Heart right ventricle (tissue), 16 donors: ENCODE measurements at regions of chr12 and their contacts with region 1.

Region 1: GRCh38 chr12:52213512-52214420 is 19.3 kb upstream of the KRT7 start:
- DNase-seq: peak; percentile 58 to 81
- ATAC-seq: peak; percentile 77 to 94 (median 88)
- H3K4me3 ChIP-seq: no peak overlapping the region
- H3K27ac ChIP-seq: no peak overlapping the region
- H3K4me1 ChIP-seq: peaks cover 0 to 39% (median 16%) of the 10 kb centered on the region in 9 donors
- H3K27me3 ChIP-seq: peaks cover 0 to 10% (median 0%) of the 10 kb centered on the region in 7 donors
- CTCF ChIP-seq: peak; percentile 92 to 98 (median 96)

Region 2: DNA sequence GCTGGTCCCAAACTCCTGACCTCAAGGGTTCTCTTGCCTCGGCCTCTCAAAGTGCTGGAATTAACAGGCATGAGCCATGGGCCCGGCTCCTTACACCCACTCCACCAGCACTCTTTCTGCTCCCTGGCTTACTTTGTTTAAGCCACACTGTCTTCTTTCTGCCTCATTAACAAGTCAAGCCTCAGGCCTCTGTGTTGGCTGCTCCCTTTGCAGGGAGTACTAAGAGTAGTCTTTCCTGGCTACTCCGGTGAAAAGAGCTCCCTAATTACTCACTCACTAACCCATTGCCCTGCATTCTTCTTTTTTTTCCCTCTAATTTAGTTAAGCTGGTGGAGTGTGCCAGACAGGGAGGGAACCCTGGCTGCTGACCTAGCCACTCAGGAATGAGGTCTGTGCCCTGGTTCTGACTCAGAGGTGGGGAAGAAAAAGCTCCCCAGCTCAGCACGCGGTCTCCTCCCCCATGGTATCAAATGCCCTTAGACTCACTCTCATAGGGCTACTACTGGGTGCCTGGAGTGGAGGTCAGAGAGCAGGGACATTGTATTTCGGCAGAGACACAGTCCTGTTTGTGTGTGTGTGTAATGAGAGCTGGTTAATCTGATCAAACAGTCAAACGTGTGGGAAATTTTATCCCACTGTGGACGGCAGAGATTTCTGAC is 842.3 kb before region 1 on chr12:
- intact Hi-C with region 1: no loop called
- DNase-seq: peak in 1 of 2 donors; percentile 30
- ATAC-seq: peak; percentile 57 to 92 (median 82)
- H3K4me3 ChIP-seq: no peak overlapping the region
- H3K27ac ChIP-seq: peak overlapping the region in 1 of 10 donors; percentile 34
- H3K4me1 ChIP-seq: peaks cover 0 to 31% (median 3%) of the 10 kb centered on the region in 9 donors
- H3K27me3 ChIP-seq: no peaks in the 10 kb centered on the region
- CTCF ChIP-seq: no peak

Region 3: DNA sequence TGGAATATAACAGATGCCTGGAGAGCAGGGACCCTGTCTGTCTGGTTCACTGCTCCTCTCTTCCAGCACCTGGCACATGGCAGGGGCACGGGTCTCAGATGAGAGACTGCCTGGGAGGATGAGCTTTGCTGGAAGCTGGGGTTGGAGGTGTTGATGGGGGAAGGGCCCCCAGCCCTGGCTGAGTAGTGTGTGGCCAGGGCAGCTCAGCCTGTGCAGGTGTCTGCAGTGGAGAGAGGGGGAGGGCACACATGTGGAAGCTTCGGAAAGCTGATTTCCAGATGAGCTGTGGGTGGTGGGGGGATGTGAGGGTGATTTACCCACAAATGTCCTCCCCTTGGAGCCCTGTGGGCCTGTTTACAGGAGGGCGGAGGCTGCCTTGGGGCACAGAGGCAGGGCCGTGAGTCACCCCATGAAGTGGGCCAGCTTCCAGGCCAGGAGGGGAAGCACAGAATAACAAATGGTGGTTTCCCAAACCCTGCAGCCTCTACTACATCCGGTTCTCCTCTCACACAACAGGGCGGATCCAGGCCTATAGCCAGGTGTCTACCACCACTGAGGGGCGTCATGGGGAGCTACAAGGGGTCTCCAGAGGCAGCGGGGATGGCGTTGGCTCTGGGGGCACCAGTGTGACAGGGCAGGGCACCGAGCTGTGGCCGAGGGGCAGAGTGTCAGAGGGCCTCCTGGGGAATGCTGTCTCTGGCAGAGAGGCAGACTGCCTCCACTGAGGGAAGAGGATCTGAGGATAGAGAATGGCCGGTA is 30.3 kb after region 1 on chr12:
- intact Hi-C with region 1: no loop called
- DNase-seq: peak; percentile 56 to 64
- ATAC-seq: peak; percentile 58 to 87 (median 76)
- H3K4me3 ChIP-seq: no peak overlapping the region
- H3K27ac ChIP-seq: peak overlapping the region in 2 of 10 donors; percentile 17 to 64
- H3K4me1 ChIP-seq: peaks cover 0 to 31% (median 18%) of the 10 kb centered on the region in 9 donors
- H3K27me3 ChIP-seq: peaks cover 0 to 7% (median 1%) of the 10 kb centered on the region in 7 donors
- CTCF ChIP-seq: no peak

Region 4: DNA sequence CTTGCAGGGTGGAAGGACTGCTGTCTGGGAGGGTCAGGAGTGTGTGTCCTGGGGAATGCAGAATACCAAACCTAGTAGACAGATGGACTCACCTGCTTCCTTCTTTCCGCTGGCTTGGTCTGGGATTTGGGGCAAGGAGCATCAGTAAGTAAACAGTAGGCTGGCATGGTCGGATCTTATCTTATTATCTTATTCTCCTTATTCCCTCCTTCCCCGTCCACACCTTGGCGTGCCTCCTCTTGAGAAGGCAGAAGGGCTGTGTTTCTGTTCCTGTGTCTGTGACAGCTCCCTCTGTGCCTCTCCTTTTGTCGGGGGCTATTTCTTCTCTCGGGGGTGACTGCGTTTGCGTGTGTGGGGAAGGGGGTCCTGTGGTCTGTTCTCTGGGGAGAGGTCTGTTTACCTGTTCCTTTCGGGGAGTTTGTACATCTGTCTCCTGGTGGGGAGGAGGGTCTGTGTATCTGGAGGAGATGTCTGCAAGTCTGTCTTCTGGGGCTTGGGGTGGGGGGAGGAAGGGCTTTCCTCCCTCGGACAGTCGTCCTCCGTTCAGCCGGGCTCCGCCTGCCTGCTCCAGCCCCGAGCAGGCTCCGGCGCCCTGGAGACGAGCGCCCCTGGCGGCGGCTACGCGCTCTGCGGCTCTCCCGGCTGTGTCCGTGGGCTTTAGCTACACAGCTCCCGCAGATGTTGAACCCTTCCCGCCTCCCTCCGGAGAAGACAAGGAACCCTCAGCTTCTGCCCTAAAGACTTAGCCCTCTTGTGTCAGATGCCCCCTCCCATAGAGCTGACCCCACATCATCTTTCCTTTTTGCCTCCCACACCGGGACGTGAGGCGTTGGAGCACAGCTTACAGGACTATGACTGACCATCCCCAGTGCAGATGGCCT is 65.0 kb after region 1 on chr12:
- intact Hi-C with region 1: loop called in 3 of 10 experiments (anchors 5 to 10 kb)
- DNase-seq: peak; percentile 62 to 82
- ATAC-seq: peak; percentile 88 to 96 (median 92)
- H3K4me3 ChIP-seq: no peak overlapping the region
- H3K27ac ChIP-seq: no peak overlapping the region
- H3K4me1 ChIP-seq: peaks cover 0 to 32% (median 10%) of the 10 kb centered on the region in 9 donors
- H3K27me3 ChIP-seq: peaks cover 0 to 49% (median 24%) of the 10 kb centered on the region in 7 donors
- CTCF ChIP-seq: peak; percentile 91 to 99 (median 98)

Region 5: GRCh38 chr12:52515927-52516831 is 302.4 kb after region 1 on chr12:
- intact Hi-C with region 1: no loop called
- DNase-seq: no peak
- ATAC-seq: no peak
- H3K4me3 ChIP-seq: no peak overlapping the region
- H3K27ac ChIP-seq: no peak overlapping the region
- H3K4me1 ChIP-seq: no peaks in the 10 kb centered on the region
- H3K27me3 ChIP-seq: peaks cover 0 to 56% (median 5%) of the 10 kb centered on the region in 7 donors
- CTCF ChIP-seq: no peak

Region 6: GRCh38 chr12:52879394-52880351 is 665.9 kb after region 1 on chr12:
- intact Hi-C with region 1: loop called in 1 of 10 experiments (anchors 5 kb)
- DNase-seq: peak; percentile 76 to 89
- ATAC-seq: peak; percentile 85 to 93 (median 90)
- H3K4me3 ChIP-seq: peak overlapping the region in 8 of 10 donors; percentile 4 to 36 (median 24)
- H3K27ac ChIP-seq: no peak overlapping the region
- H3K4me1 ChIP-seq: peaks cover 0 to 20% (median 12%) of the 10 kb centered on the region in 9 donors
- H3K27me3 ChIP-seq: peaks cover 0 to 25% (median 17%) of the 10 kb centered on the region in 7 donors
- CTCF ChIP-seq: peak; percentile 58 to 77 (median 65)